ENCODE measurements at regions of chr7 and their contacts with region 1.

Region 1: GRCh38 chr7:134646425-134647305 is at the start of gene BPGM:
- DNase-seq: peak; percentile 88 to 100 (median 98)
- ATAC-seq: peak; percentile 94
- H3K4me3 Mint-ChIP-seq: no peak within 1 kb of the TSS
- H3K27ac Mint-ChIP-seq: no peak within 1 kb of the TSS
- H3K4me1 Mint-ChIP-seq: peaks cover 16 to 41% (median 38%) of the 10 kb centered on the region in 4 donors
- H3K27me3 Mint-ChIP-seq: no peaks in the 10 kb centered on the region
- polyA plus RNA-seq, gene BPGM: 17.2 to 30.1 (median 21.3) TPM

Region 2: GRCh38 chr7:134602881-134603451 is 43.7 kb before region 1 on chr7:
- POLR2A ChIA-PET with region 1: no interaction called
- DNase-seq: peak in 1 of 10 donors; percentile 13
- ATAC-seq: peak in 1 of 2 donors; percentile 50
- H3K4me3 Mint-ChIP-seq: peak overlapping the region in 2 of 10 donors; percentile 1 to 23
- H3K27ac Mint-ChIP-seq: no peak overlapping the region
- H3K4me1 Mint-ChIP-seq: peaks cover 3 to 6% (median 4%) of the 10 kb centered on the region in 4 donors
- H3K27me3 Mint-ChIP-seq: peaks cover 20 to 57% (median 28%) of the 10 kb centered on the region in 5 donors

Region 3: DNA sequence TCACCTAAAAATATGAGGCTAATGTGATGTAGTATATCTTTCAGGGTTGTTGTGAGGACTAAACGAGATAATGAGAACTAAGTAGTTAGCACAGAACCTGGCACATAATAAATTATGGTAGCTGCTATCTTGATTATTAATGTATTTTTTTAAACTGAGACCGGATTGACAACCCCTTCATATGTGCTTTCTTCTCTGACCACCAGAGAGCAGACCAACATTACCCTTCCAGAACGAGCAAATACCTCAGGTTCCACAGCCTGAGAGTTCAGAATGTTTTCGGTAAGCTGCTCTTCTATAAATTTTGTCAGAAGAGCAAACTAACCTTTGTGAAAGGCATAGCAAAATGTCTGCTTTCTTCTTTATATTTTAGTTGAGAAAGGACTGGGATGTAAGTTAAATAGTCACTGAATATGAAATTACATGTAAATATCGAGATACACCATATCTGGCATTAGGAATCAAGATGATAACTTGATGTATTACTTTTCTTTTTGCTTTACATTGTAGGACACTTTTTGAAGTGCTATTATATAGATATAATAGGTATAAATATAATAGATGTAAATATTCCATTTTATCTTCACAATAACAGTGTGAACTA is 13.6 kb before region 1 on chr7:
- POLR2A ChIA-PET with region 1: interaction called, 41 read pairs
- DNase-seq: peak in 9 of 10 donors; percentile 18 to 74 (median 55)
- ATAC-seq: peak; percentile 81 to 92
- H3K4me3 Mint-ChIP-seq: no peak overlapping the region
- H3K27ac Mint-ChIP-seq: peak overlapping the region in 1 of 10 donors; percentile 3
- H3K4me1 Mint-ChIP-seq: peaks cover 6 to 22% (median 19%) of the 10 kb centered on the region in 4 donors
- H3K27me3 Mint-ChIP-seq: peaks cover 7 to 21% (median 17%) of the 10 kb centered on the region in 5 donors

Region 4: GRCh38 chr7:134669845-134670373 is 23.2 kb after region 1 on chr7:
- POLR2A ChIA-PET with region 1: interaction called, 144 read pairs
- DNase-seq: peak; percentile 73 to 92 (median 86)
- ATAC-seq: peak; percentile 95 to 98
- H3K4me3 Mint-ChIP-seq: peak overlapping the region; percentile 40 to 87 (median 74)
- H3K27ac Mint-ChIP-seq: peak overlapping the region; percentile 86 to 100 (median 97)
- H3K4me1 Mint-ChIP-seq: peaks cover 13 to 60% (median 49%) of the 10 kb centered on the region in 4 donors
- H3K27me3 Mint-ChIP-seq: no peaks in the 10 kb centered on the region

Region 5: DNA sequence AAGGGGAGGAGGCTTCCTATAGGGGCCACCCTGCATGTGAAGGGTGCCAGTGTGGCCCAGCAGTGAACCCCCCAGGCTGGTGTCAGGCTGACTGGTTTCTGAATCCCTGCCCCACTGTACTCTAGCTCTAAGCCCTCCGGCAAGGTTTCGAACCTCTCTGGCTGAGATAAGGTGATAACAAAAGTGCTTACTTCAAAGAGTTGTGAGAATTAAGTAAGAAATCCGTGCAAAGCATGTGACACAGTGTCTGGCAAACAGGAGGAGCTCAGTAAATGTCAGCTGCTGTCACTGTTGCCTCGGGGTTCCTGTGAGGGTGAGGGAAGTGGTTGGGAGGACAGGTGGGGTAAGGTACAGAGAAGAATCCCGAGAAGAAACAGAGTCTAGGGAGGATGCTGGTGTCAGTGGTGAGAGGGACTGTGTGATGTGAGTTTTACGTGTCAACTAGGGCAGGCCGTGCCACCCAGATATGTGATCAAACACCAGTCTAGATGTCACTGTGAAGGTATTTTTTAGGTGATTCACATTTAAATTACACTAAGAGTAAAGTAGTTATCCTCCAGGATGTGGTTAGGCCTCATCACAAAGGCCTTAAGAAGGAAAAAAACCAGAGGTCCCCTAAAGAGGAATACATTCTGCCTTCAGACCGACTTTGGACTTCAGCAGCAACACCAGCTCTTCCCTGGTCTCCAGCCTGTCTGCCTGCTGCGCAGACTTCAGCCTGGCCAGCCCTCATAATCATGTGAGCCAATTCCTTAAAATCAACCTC is 64.4 kb after region 1 on chr7:
- POLR2A ChIA-PET with region 1: interaction called, 18 read pairs
- DNase-seq: peak; percentile 26 to 88 (median 78)
- ATAC-seq: peak; percentile 94 to 95
- H3K4me3 Mint-ChIP-seq: peak overlapping the region; percentile 26 to 80 (median 72)
- H3K27ac Mint-ChIP-seq: peak overlapping the region; percentile 93 to 97 (median 96)
- H3K4me1 Mint-ChIP-seq: peaks cover 11 to 21% (median 19%) of the 10 kb centered on the region in 4 donors
- H3K27me3 Mint-ChIP-seq: no peaks in the 10 kb centered on the region

Region 6: GRCh38 chr7:135147899-135148721 is 501.4 kb after region 1 on chr7 and contains the start of gene TMEM140:
- POLR2A ChIA-PET with region 1: interaction called, 18 read pairs
- DNase-seq: peak; percentile 34 to 88 (median 74)
- ATAC-seq: peak; percentile 81 to 84
- H3K4me3 Mint-ChIP-seq: peak within 1 kb of the TSS; percentile 85 to 98 (median 93)
- H3K27ac Mint-ChIP-seq: peak within 1 kb of the TSS; percentile 96 to 100 (median 98)
- H3K4me1 Mint-ChIP-seq: peaks cover 37 to 83% (median 74%) of the 10 kb centered on the region in 4 donors
- H3K27me3 Mint-ChIP-seq: no peaks in the 10 kb centered on the region
- polyA plus RNA-seq, gene TMEM140: 13.9 to 36.9 (median 20.2) TPM

Measured in naive thymus-derived CD8-positive, alpha-beta T cell (primary cell).